Activated naive CD4-positive, alpha-beta T cell treated with anti-CD3 and anti-CD28 coated beads for 36 hours (primary cell): ENCODE measurements at regions of chr6 and their contacts with region 1.

Region 1: GRCh38 chr6:150600301-150601017 is 774 bp downstream of the PLEKHG1 start:
- DNase-seq: peak; percentile 87
- H3K4me3 Mint-ChIP-seq: peak overlapping the region; percentile 84
- H3K27ac Mint-ChIP-seq: peak overlapping the region; percentile 90
- H3K4me1 Mint-ChIP-seq: peaks cover 25% of the 10 kb centered on the region
- H3K27me3 Mint-ChIP-seq: peaks cover 46% of the 10 kb centered on the region

Region 2: DNA sequence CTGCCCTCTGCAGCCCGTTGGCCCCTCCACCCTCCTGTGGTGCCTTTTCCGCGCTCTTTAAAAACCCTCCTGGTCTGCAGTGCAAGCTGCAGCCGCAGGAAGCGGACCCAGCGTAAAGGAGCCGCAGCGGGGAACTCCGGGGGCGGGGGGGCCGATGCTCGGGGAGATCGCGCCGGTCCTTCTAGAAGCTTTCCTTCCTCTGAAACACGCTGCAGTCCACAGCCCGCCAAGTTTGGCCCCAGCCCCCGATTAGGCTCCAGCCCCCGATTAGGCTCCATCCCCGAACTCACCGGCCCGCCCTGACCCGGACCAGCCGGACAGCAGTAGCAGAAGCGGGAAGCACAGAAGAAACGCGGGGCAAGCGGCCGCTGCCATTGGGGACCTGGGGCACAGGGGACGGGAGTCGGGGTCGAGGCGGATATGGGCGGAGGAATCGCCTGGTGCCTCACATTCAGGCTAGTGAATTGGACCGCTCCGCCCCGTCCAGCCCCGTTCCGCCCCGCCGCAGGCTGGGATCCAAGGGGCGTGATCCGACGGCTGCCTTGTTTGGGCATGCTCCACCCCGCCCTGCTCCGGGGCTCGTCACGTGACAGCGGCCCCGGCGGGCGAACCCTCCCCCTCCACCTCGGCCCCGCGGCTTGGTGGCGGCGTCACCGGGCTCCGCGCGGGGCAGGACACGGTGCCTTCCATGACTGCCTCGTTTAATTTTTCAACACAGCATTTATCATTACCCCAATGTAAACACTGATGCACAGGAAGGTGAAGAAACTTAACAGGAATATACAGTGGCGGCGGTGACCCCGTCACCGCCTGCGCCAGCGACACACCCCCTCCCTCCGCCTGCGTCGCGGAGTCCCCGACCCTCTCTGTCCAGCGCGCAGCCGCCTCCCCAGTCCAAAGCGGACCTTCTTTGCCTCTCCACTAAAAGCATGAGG is 595.4 kb before region 1 on chr6:
- CTCF ChIA-PET with region 1: no interaction called
- intact Hi-C with region 1: loop called (anchors 10 kb)
- DNase-seq: peak; percentile 94
- H3K4me3 Mint-ChIP-seq: peak overlapping the region; percentile 86
- H3K27ac Mint-ChIP-seq: no peak overlapping the region
- H3K4me1 Mint-ChIP-seq: peaks cover 51% of the 10 kb centered on the region
- H3K27me3 Mint-ChIP-seq: peaks cover 26% of the 10 kb centered on the region

Region 3: GRCh38 chr6:150169609-150170008 is 430.9 kb before region 1 on chr6:
- CTCF ChIA-PET with region 1: no interaction called
- intact Hi-C with region 1: loop called (anchors 1 kb)
- DNase-seq: peak; percentile 71
- H3K4me3 Mint-ChIP-seq: no peak overlapping the region
- H3K27ac Mint-ChIP-seq: no peak overlapping the region
- H3K4me1 Mint-ChIP-seq: peaks cover 16% of the 10 kb centered on the region
- H3K27me3 Mint-ChIP-seq: peaks cover 37% of the 10 kb centered on the region

Region 4: GRCh38 chr6:150491131-150491810 is 109.2 kb before region 1 on chr6:
- CTCF ChIA-PET with region 1: no interaction called
- intact Hi-C with region 1: loop called (anchors 1 kb)
- DNase-seq: peak; percentile 20
- H3K4me3 Mint-ChIP-seq: peak overlapping the region; percentile 51
- H3K27ac Mint-ChIP-seq: peak overlapping the region; percentile 82
- H3K4me1 Mint-ChIP-seq: peaks cover 9% of the 10 kb centered on the region
- H3K27me3 Mint-ChIP-seq: peaks cover 6% of the 10 kb centered on the region

Region 5: DNA sequence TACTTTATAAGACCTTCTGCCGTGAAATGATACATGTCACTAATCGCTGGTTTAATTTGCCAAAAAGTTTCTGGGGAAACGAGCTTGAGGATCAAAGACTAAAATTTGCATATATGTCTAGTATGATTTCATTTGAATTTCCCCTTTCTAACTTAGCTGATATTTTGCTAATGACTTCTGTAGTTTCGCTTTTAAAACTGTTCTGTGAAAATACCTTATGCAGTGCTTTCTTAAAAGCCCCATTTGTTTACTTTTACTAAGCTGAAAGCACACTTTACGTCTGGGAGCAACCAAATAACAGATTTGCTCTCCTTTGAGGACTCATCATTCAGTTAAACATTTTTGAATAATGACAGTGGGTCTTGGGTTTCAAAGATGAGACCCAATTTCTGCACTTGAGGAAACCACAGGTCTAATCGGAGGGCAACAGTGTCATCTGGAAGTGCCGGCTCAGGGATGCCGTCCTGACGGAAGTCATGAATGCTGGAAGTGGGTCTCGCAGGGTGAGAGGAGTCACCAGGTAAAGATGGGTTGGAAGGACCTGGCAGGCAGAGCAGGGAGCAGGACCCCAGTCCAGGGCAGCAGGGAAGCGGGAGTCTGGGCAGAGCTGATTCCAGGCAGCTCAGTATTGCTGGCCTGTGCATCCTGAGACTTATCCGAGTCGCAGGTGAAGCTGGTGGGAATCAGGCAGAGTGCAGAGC is 32.5 kb after region 1 on chr6:
- CTCF ChIA-PET with region 1: interaction called, 3 read pairs
- intact Hi-C with region 1: loop called (anchors 1 kb)
- DNase-seq: peak; percentile 17
- H3K4me3 Mint-ChIP-seq: peak overlapping the region; percentile 57
- H3K27ac Mint-ChIP-seq: peak overlapping the region; percentile 84
- H3K4me1 Mint-ChIP-seq: peaks cover 62% of the 10 kb centered on the region
- H3K27me3 Mint-ChIP-seq: peaks cover 44% of the 10 kb centered on the region

Region 6: GRCh38 chr6:150987371-150987828 is 386.9 kb after region 1 on chr6:
- CTCF ChIA-PET with region 1: interaction called, 3 read pairs
- intact Hi-C with region 1: loop called (anchors 2 kb)
- DNase-seq: peak; percentile 79
- H3K4me3 Mint-ChIP-seq: no peak overlapping the region
- H3K27ac Mint-ChIP-seq: peak overlapping the region; percentile 90
- H3K4me1 Mint-ChIP-seq: peaks cover 7% of the 10 kb centered on the region
- H3K27me3 Mint-ChIP-seq: no peaks in the 10 kb centered on the region

Region 7: DNA sequence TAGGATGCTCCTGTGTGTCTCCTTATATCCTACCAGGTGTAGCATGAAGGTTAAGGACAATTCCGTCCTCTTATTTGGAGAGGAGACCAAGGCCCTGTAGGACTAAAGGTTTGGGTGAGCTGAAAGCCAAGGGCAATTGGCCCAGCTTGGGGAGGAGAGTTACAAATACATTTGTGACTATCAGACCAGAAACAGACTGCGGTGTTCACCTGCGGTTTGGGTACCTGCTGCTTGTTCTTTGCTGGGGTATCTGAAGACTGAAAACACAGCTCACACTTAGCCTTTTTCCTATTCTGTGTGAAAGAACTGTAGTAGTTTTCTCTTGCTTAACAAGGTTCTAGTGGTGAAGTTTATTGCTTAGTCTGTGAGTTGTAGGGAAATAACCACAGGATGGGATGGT is 1262.0 kb after region 1 on chr6:
- CTCF ChIA-PET with region 1: no interaction called
- intact Hi-C with region 1: no loop called
- DNase-seq: no peak
- H3K4me3 Mint-ChIP-seq: no peak overlapping the region
- H3K27ac Mint-ChIP-seq: no peak overlapping the region
- H3K4me1 Mint-ChIP-seq: no peaks in the 10 kb centered on the region
- H3K27me3 Mint-ChIP-seq: no peaks in the 10 kb centered on the region